Dendritic cell treated with granulocyte-macrophage colony-stimulating factor and Interleukin-4, amounts not matched to agents 40 ng/mL and 50 ng/mL, for 4 days (primary cell): ENCODE measurements at regions of chr15 and their contacts with region 1.

Region 1: DNA sequence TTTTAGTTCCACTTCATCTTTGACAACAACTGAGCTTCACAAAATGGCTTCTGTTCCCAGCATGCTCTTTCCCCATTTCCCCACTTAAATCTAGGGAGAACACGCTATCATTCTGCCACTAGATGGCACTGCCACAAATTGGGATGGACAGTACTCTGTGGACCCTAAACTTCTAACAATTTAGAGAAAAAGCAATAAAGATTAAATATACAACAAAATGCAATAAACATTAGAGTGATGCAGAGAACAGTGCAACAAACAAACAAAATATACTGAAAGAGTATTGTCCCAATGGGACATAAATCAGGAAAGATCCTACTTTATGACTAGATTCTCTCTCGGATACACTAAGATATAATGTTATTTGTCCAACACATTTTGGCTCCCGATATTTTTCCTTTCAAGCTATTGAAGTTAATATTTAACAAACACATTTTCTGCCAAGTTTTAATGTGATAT is 169.7 kb upstream of the TMCO5A start:
- H3K4me3 Mint-ChIP-seq: no peak overlapping the region
- H3K27ac Mint-ChIP-seq: no peak overlapping the region
- H3K4me1 Mint-ChIP-seq: peaks cover 23% of the 10 kb centered on the region
- H3K27me3 Mint-ChIP-seq: peaks cover 1% of the 10 kb centered on the region

Region 2: DNA sequence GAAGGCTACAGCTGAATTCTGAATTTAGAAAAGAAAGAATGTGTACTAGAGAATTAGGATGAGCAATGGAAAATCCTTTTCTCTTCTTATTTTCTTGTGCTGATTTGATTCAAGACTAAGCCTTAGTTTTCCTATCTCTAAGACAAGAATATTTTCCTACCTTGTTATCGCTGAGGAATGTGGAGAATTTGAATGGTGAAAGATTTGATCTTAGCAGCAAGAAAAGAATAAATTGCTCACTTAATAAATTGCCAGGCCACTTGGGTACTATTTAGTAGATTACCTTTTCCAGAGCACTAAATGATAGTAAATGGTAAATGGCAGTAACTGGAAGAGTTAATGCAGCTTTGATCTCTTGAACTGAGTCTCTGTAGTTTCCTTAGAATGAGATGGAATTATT is 518.7 kb before region 1 on chr15:
- intact Hi-C with region 1: no loop called
- H3K4me3 Mint-ChIP-seq: no peak overlapping the region
- H3K27ac Mint-ChIP-seq: no peak overlapping the region
- H3K4me1 Mint-ChIP-seq: no peaks in the 10 kb centered on the region
- H3K27me3 Mint-ChIP-seq: no peaks in the 10 kb centered on the region

Region 3: GRCh38 chr15:37709669-37710068 is 55.1 kb before region 1 on chr15:
- intact Hi-C with region 1: loop called (anchors 10 kb)
- H3K4me3 Mint-ChIP-seq: no peak overlapping the region
- H3K27ac Mint-ChIP-seq: no peak overlapping the region
- H3K4me1 Mint-ChIP-seq: no peaks in the 10 kb centered on the region
- H3K27me3 Mint-ChIP-seq: no peaks in the 10 kb centered on the region